ENCODE measurements at regions of chr10 and their contacts with region 1.

Region 1: GRCh38 chr10:12006671-12007070 is 35.9 kb downstream of the UPF2 start:
- DNase-seq: no peak
- ATAC-seq: no peak
- H3K4me3 ChIP-seq: no peak overlapping the region
- H3K27ac ChIP-seq: no peak overlapping the region
- H3K4me1 ChIP-seq: no peaks in the 10 kb centered on the region
- H3K27me3 ChIP-seq: no peaks in the 10 kb centered on the region
- CTCF ChIP-seq: no peak
- EP300 ChIP-seq: no peak
- POLR2A ChIP-seq: no peak
- RAD21 ChIP-seq: no peak

Region 2: DNA sequence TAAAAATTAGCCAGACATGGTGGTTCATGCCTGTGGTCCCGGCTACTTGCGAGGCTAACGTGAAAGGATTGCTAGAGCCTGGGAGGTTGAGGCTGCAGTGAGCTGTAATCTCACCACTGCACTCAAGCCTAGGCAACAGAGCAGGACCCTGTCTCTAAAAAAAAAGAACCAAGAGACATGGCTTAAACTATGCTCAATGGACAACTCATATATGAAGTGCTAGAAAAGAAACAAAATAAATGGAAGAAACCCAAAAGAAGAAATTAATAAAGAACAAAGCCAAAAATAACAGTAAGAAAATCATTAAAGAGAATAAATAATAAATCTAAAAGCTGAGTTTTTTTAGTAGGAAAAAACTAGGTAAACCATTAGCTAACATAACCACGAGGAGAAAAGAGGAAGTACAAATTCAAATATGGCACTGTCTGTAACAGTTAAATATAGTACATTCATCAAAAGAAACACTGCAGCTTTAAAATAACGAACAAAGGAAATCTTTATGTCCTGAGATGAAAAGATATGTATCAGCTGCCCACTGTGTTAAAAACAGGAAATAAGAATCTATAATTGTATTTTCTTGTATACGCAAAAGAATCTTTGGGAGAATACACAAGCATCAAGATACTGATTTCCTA is 12.7 kb before region 1 on chr10:
- CTCF ChIA-PET with region 1: interaction called, 4 read pairs
- POLR2A ChIA-PET with region 1: no interaction called
- RAD21 ChIA-PET with region 1: interaction called, 3 read pairs
- SMC1A ChIA-PET with region 1: interaction called, 11 read pairs
- in situ Hi-C with region 1: no loop called
- intact Hi-C with region 1: no loop called
- DNase-seq: peak; percentile 15
- ATAC-seq: peak; percentile 92
- H3K4me3 ChIP-seq: no peak overlapping the region
- H3K27ac ChIP-seq: peak overlapping the region; percentile 68
- H3K4me1 ChIP-seq: peaks cover 6% of the 10 kb centered on the region; the same call in 1 of the 2 replicates
- H3K27me3 ChIP-seq: no peaks in the 10 kb centered on the region
- CTCF ChIP-seq: no peak
- EP300 ChIP-seq: peak; percentile 54 to 71; a peak in 2 of 4 replicates
- POLR2A ChIP-seq: no peak
- RAD21 ChIP-seq: no peak

Region 3: GRCh38 chr10:12107781-12108180 is 101.1 kb after region 1 on chr10:
- CTCF ChIA-PET with region 1: no interaction called
- POLR2A ChIA-PET with region 1: interaction called, 10 read pairs
- RAD21 ChIA-PET with region 1: no interaction called
- SMC1A ChIA-PET with region 1: no interaction called
- in situ Hi-C with region 1: no loop called
- intact Hi-C with region 1: no loop called
- DNase-seq: no peak
- ATAC-seq: no peak
- H3K4me3 ChIP-seq: no peak overlapping the region
- H3K27ac ChIP-seq: no peak overlapping the region
- H3K4me1 ChIP-seq: peaks cover 6% of the 10 kb centered on the region; the same call in 1 of the 2 replicates
- H3K27me3 ChIP-seq: no peaks in the 10 kb centered on the region
- CTCF ChIP-seq: no peak
- EP300 ChIP-seq: no peak
- POLR2A ChIP-seq: no peak
- RAD21 ChIP-seq: no peak

Region 4: GRCh38 chr10:12221323-12222298 is 214.9 kb after region 1 on chr10:
- CTCF ChIA-PET with region 1: no interaction called
- POLR2A ChIA-PET with region 1: no interaction called
- RAD21 ChIA-PET with region 1: no interaction called
- SMC1A ChIA-PET with region 1: no interaction called
- in situ Hi-C with region 1: no loop called
- intact Hi-C with region 1: no loop called
- DNase-seq: no peak
- ATAC-seq: no peak
- H3K4me3 ChIP-seq: no peak overlapping the region
- H3K27ac ChIP-seq: no peak overlapping the region
- H3K4me1 ChIP-seq: no peaks in the 10 kb centered on the region
- H3K27me3 ChIP-seq: no peaks in the 10 kb centered on the region
- CTCF ChIP-seq: no peak
- EP300 ChIP-seq: no peak
- POLR2A ChIP-seq: no peak
- RAD21 ChIP-seq: no peak

Measured in GM12878 (cell line).